IMR-90 (cell line): ENCODE measurements at regions of chr6 and their contacts with region 1.

Region 1: DNA sequence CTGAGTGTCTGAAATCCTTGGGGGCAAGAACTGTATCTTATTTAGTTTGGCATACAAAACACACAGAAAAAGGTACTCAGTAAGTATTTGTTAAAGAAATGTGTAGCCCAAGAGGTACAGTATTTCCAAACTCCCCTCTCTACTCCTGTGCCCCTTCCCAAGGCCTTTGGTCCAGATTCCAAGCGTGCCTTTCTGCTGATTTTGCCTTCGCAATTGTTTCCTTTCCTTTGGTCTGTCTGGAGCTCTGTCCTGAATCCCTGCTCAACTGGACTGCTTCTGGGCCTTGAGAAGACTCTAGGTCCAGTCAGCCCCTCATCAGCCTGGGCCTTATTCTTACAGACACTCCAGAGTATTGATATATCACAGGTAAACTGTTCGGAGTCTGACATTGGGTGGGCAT is 122.2 kb upstream of the SYNCRIP start:
- DNase-seq: peak; percentile 4
- ATAC-seq: peak; percentile 74
- H3K4me3 ChIP-seq: no peak overlapping the region
- H3K27ac ChIP-seq: no peak overlapping the region
- H3K4me1 ChIP-seq: peaks cover 2% of the 10 kb centered on the region; the same call in 1 of the 2 replicates
- H3K27me3 ChIP-seq: no peaks in the 10 kb centered on the region
- CTCF ChIP-seq: no peak
- POLR2A ChIP-seq: no peak
- RAD21 ChIP-seq: no peak

Region 2: GRCh38 chr6:85537055-85537494 is 227.8 kb before region 1 on chr6:
- CTCF ChIA-PET with region 1: no interaction called
- POLR2A ChIA-PET with region 1: no interaction called
- dilution Hi-C with region 1: no loop called
- in situ Hi-C with region 1: no loop called
- intact Hi-C with region 1: no loop called
- DNase-seq: peak; percentile 24
- ATAC-seq: peak; percentile 56; the same call in 1 of the 2 replicates
- H3K4me3 ChIP-seq: no peak overlapping the region
- H3K27ac ChIP-seq: no peak overlapping the region
- H3K4me1 ChIP-seq: no peaks in the 10 kb centered on the region
- H3K27me3 ChIP-seq: no peaks in the 10 kb centered on the region
- CTCF ChIP-seq: peak; percentile 46
- POLR2A ChIP-seq: no peak
- RAD21 ChIP-seq: peak; percentile 24; the same call in 1 of the 2 replicates

Region 3: GRCh38 chr6:85865420-85866369 is 100.9 kb after region 1 on chr6:
- CTCF ChIA-PET with region 1: no interaction called
- POLR2A ChIA-PET with region 1: no interaction called
- dilution Hi-C with region 1: no loop called
- in situ Hi-C with region 1: no loop called
- intact Hi-C with region 1: loop called (anchors 10 kb)
- DNase-seq: peak; percentile 71
- ATAC-seq: peak; percentile 76
- H3K4me3 ChIP-seq: peak overlapping the region; percentile 58
- H3K27ac ChIP-seq: peak overlapping the region; percentile 91
- H3K4me1 ChIP-seq: peaks cover 7% of the 10 kb centered on the region; the same call in 1 of the 2 replicates
- H3K27me3 ChIP-seq: no peaks in the 10 kb centered on the region
- CTCF ChIP-seq: no peak
- POLR2A ChIP-seq: no peak
- RAD21 ChIP-seq: no peak